ENCODE measurements at regions of chr10 and their contacts with region 1.

Region 1: DNA sequence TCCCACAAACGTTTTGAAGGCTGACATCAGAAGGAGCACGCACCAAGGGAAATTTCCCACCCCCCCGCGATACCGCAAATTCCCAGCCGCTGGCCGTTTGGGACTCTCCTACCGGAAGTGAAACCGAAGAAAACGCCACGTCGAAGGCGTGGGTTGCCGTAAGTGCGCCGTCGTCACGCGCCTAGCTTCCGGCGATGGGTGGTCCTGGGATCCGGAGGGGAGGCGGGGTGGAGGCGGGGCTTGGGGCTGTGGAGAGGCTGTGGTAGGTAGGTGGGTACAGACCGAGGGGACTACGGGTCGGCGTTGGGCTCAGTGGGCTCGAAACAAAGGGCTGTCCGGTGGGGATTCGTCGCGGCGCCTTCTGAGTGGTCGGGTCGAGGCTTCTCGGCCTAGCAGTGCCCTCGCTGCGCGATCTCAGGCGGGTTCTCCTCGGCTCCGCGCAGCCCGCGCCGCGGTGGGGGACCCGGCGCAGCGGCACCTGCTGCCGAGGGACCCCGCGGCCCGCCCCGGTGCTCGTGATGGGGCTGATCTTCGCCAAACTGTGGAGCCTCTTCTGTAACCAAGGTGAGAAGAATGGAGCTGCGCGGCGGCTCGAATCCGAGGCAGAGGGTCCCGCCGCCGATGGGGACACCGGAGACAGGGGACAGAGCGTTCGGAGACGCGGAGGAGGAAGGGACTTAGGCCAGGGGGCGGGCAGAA is at the start of gene ARL5B:
- DNase-seq: peak; percentile 97 to 99
- H3K4me3 ChIP-seq: peak within 1 kb of the TSS; percentile 82
- H3K4me3 Mint-ChIP-seq: peak within 1 kb of the TSS; percentile 98
- H3K27ac Mint-ChIP-seq: peak within 1 kb of the TSS; percentile 98
- H3K4me1 ChIP-seq: peaks cover 24% of the 10 kb centered on the region
- H3K4me1 Mint-ChIP-seq: peaks cover 13% of the 10 kb centered on the region
- H3K27me3 ChIP-seq: no peaks in the 10 kb centered on the region
- H3K27me3 Mint-ChIP-seq: no peaks in the 10 kb centered on the region
- CTCF ChIP-seq: no peak
- total RNA-seq, gene ARL5B: 61.7 and 65.0 TPM in 2 replicates

Region 2: GRCh38 chr10:18619016-18619415 is 40.3 kb before region 1 on chr10:
- CTCF ChIA-PET with region 1: no interaction called
- POLR2A ChIA-PET with region 1: interaction called, 6 read pairs
- intact Hi-C with region 1: loop called (anchors 1 kb)
- DNase-seq: no peak
- H3K4me3 ChIP-seq: no peak overlapping the region
- H3K4me3 Mint-ChIP-seq: no peak overlapping the region
- H3K27ac Mint-ChIP-seq: peak overlapping the region; percentile 24
- H3K4me1 ChIP-seq: peaks cover 52% of the 10 kb centered on the region
- H3K4me1 Mint-ChIP-seq: peaks cover 66% of the 10 kb centered on the region
- H3K27me3 ChIP-seq: no peaks in the 10 kb centered on the region
- H3K27me3 Mint-ChIP-seq: no peaks in the 10 kb centered on the region
- CTCF ChIP-seq: no peak

Region 3: GRCh38 chr10:18681971-18682411 is 22.7 kb after region 1 on chr10:
- CTCF ChIA-PET with region 1: no interaction called
- POLR2A ChIA-PET with region 1: interaction called, 5 read pairs
- intact Hi-C with region 1: loop called (anchors 1 kb)
- DNase-seq: no peak
- H3K4me3 ChIP-seq: no peak overlapping the region
- H3K4me3 Mint-ChIP-seq: peak overlapping the region; percentile 61
- H3K27ac Mint-ChIP-seq: peak overlapping the region; percentile 83
- H3K4me1 ChIP-seq: peaks cover 28% of the 10 kb centered on the region
- H3K4me1 Mint-ChIP-seq: peaks cover 27% of the 10 kb centered on the region
- H3K27me3 ChIP-seq: no peaks in the 10 kb centered on the region
- H3K27me3 Mint-ChIP-seq: no peaks in the 10 kb centered on the region
- CTCF ChIP-seq: no peak